HepG2 (cell line): ENCODE measurements at regions of chr3 and their contacts with region 1.

Region 1: DNA sequence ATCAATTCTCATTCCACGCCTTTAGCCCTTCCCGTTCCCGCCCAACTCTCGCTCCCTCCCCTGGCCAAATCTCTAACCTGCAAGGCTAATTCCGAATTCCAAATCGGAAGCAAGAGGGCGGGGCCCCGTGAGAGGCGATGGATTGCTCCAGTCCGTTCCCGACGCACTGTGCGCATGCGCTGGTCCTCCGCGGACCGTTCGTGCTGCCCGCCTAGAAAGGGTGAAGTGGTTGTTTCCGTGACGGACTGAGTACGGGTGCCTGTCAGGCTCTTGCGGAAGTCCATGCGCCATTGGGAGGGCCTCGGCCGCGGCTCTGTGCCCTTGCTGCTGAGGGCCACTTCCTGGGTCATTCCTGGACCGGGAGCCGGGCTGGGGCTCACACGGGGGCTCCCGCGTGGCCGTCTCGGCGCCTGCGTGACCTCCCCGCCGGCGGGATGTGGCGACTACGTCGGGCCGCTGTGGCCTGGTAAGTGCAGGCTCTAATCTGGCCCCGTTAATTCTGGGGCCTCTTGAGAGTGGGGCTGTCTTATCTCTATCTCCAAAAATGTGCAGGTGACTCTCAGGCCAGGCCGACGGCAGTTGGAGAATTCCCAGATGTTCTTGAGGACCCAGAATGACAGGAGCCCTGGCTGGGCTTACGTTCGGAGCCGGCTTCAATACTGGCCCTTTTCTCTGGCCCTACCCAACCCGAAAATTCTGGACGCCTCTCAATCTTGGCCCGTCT is at the start of gene OPA1:
- DNase-seq: peak; percentile 98
- ATAC-seq: peak; percentile 99
- H3K4me3 ChIP-seq: peak within 1 kb of the TSS; percentile 62 to 94 (median 92)
- H3K27ac ChIP-seq: peak within 1 kb of the TSS; percentile 86
- H3K4me1 ChIP-seq: peaks cover 39% of the 10 kb centered on the region
- H3K27me3 ChIP-seq: peaks cover 0 to 5% of the 10 kb centered on the region in 2 experiments; a peak in 1 of 5 replicates
- CTCF ChIP-seq: peak; percentile 56
- EP300 ChIP-seq: peak in 1 of 2 experiments; percentile 65; a peak in 2 of 4 replicates
- POLR2A ChIP-seq: peak; percentile 76 to 92
- RAD21 ChIP-seq: peak; percentile 54
- total RNA-seq, gene OPA1: 78.5 and 126 TPM in 2 replicates

Region 2: DNA sequence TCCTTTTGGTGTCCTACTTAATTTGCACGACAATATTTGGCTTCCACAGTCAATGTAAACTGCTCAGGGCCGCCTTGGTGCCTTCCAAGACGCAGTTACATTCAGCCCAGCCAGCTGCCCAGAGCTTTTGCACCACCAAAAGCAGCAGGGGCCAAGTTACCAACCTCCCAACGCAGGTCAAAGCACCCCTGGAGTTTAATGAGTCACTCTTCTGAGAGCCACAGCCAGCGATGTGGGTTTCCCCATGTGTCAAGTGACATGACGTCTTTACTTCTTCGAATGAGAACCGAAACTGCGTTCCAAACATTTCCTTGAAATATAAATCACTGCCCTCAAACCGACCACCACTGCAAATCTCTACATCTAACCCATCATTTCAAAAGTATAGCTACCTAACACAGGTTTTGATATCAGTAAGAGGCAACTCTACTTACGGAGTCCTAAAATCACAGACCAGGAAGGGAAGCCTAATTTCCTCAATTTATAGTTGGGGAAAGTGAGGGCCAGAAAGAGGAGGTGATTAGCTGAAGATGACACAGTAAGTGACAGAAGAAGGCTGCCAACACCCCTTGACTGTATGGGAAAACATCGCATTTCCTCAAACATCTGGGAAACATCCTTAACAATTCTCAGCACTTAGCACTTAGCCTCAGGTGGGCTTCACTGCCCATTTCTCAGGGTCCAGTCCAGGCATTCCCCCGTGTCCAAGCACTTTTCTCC is 700.0 kb before region 1 on chr3:
- CTCF ChIA-PET with region 1: no interaction called
- POLR2A ChIA-PET with region 1: no interaction called
- in situ Hi-C with region 1: no loop called
- intact Hi-C with region 1: loop called (anchors 10 kb)
- DNase-seq: no peak
- ATAC-seq: no peak
- H3K4me3 ChIP-seq: no peak overlapping the region
- H3K27ac ChIP-seq: no peak overlapping the region
- H3K4me1 ChIP-seq: peaks cover 67% of the 10 kb centered on the region
- H3K27me3 ChIP-seq: no peaks in the 10 kb centered on the region
- CTCF ChIP-seq: no peak
- EP300 ChIP-seq: no peak
- POLR2A ChIP-seq: no peak
- RAD21 ChIP-seq: no peak

Region 3: DNA sequence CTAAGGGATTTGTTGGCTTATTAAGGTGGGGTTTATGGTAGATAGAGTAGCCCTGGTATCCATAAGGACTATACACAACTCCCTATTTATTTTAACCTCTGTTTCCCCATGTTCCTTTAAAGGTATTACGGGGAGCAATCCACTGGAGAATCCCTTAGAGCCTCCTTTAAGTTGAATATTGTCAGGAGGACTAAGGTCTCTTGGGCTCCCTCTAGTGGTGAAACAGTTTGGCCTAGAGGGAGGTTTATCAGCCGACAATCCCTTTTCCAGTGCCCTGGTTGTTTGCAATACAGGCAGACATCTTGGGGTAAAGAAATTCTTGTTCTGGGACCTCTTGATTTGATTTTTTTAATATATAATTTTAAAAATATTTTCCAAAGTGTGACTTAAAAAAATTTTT is 12.8 kb after region 1 on chr3:
- CTCF ChIA-PET with region 1: no interaction called
- POLR2A ChIA-PET with region 1: no interaction called
- in situ Hi-C with region 1: no loop called
- intact Hi-C with region 1: loop called (anchors 1 kb)
- DNase-seq: peak; percentile 62
- ATAC-seq: peak; percentile 91
- H3K4me3 ChIP-seq: no peak overlapping the region
- H3K27ac ChIP-seq: no peak overlapping the region
- H3K4me1 ChIP-seq: no peaks in the 10 kb centered on the region
- H3K27me3 ChIP-seq: no peaks in the 10 kb centered on the region
- CTCF ChIP-seq: peak; percentile 67
- EP300 ChIP-seq: no peak
- POLR2A ChIP-seq: no peak
- RAD21 ChIP-seq: no peak